Activated CD4-positive, alpha-beta memory T cell treated with anti-CD3 and anti-CD28 coated beads for 36 hours (primary cell): ENCODE measurements at regions of chr4 and their contacts with region 1.

Region 1: DNA sequence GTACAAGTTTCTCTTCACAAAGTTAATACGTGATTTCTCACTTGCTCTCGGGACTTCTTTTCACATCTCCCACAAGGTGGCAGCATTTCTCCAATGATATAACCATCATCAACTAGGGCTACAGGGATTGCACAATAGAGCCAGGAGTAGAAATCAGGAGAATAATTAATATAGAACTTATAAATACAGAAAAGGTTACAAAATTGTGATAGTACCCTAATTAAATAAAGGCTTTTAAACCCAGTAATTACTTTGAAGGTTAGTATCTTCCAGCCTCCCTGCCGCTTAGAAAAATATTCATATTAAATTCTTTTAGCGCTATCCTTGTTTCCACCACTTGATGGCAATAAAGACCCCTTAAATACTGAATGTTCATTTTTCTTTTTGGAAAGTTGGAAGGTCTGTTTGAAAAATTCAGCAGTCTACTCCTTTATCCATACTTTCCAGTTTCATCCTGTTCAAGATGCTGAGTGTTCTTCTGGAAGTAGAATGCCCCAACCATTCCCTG is 65.8 kb downstream of the RASGEF1B start:
- DNase-seq: peak; percentile 13
- H3K4me3 Mint-ChIP-seq: peak overlapping the region; percentile 4
- H3K27ac Mint-ChIP-seq: no peak overlapping the region
- H3K4me1 Mint-ChIP-seq: peaks cover 5% of the 10 kb centered on the region
- H3K27me3 Mint-ChIP-seq: no peaks in the 10 kb centered on the region

Region 2: GRCh38 chr4:81844717-81845116 is 438.8 kb after region 1 on chr4:
- CTCF ChIA-PET with region 1: interaction called, 6 read pairs
- POLR2A ChIA-PET with region 1: no interaction called
- intact Hi-C with region 1: loop called (anchors 1 kb)
- DNase-seq: peak; percentile 79
- H3K4me3 Mint-ChIP-seq: no peak overlapping the region
- H3K27ac Mint-ChIP-seq: no peak overlapping the region
- H3K4me1 Mint-ChIP-seq: peaks cover 8% of the 10 kb centered on the region
- H3K27me3 Mint-ChIP-seq: peaks cover 2% of the 10 kb centered on the region

Region 3: DNA sequence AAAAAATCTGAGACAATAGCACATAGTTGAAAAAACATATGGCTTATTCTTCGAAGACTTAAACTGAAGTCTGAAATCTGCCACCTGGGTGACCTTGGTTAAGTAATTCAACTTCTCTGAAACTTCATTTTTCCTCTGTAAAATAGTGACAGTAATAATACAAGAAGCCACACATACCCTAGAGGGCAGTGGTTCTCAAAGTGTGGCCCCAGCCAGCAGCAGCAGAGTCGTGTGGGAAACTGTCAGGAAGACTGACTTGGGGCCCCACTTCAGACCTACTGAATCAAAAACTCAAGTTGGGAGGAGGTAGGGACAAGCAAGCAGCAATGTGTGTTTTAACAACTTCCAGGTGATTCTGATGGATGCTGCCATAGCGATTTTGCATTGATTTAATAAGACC is 718.0 kb after region 1 on chr4:
- CTCF ChIA-PET with region 1: no interaction called
- POLR2A ChIA-PET with region 1: no interaction called
- intact Hi-C with region 1: loop called (anchors 5 kb)
- DNase-seq: peak; percentile 11
- H3K4me3 Mint-ChIP-seq: no peak overlapping the region
- H3K27ac Mint-ChIP-seq: no peak overlapping the region
- H3K4me1 Mint-ChIP-seq: peaks cover 2% of the 10 kb centered on the region
- H3K27me3 Mint-ChIP-seq: no peaks in the 10 kb centered on the region

Region 4: GRCh38 chr4:82268050-82268825 is 862.3 kb after region 1 on chr4:
- CTCF ChIA-PET with region 1: interaction called, 13 read pairs
- POLR2A ChIA-PET with region 1: no interaction called
- intact Hi-C with region 1: loop called (anchors 1 kb)
- DNase-seq: peak; percentile 54
- H3K4me3 Mint-ChIP-seq: no peak overlapping the region
- H3K27ac Mint-ChIP-seq: no peak overlapping the region
- H3K4me1 Mint-ChIP-seq: peaks cover 9% of the 10 kb centered on the region
- H3K27me3 Mint-ChIP-seq: peaks cover 3% of the 10 kb centered on the region